Prostate gland (tissue), 2 donors: ENCODE measurements at regions of chr2 and their contacts with region 1.

Region 1: GRCh38 chr2:86298411-86299379 is 38.7 kb downstream of the REEP1 start:
- DNase-seq: no peak
- H3K4me3 ChIP-seq: no peak overlapping the region
- H3K27ac ChIP-seq: peak overlapping the region in 1 of 2 donors; percentile 13
- H3K4me1 ChIP-seq: no peaks in the 10 kb centered on the region
- H3K27me3 ChIP-seq: no peaks in the 10 kb centered on the region
- CTCF ChIP-seq: peak in 1 of 4 experiments; percentile 14
- POLR2A ChIP-seq: no peak

Region 2: DNA sequence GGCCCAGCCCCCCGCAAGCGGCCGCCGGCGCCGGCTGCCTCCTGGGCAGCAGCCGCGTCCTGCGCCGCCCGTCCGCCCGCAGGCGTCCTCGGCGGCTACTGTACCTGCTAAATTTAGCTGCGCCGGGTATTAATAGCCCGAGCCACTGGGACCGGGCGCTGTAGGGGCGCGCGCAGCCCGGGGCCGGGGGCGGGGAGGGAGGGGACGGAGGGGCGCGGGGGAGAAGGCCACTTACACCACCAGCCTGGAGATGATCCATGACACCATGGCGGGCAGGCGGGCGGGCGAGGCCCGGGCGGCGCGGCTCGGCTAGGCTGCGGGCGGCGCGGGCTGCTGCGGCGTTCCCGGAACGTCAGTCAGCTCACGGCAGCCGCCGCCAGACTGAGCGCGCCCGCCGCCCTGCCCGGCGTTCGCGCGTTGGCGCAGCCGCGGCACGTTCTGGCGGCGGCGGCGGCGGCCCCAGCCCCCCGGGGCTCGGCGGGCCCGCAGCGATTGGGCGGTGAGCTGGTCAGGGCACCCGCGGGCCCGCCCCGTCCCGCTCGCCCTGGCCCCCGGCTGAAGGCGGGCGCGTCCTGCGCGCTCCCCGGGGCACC is 38.6 kb after region 1 on chr2 and contains the start of gene REEP1:
- intact Hi-C with region 1: loop called (anchors 5 kb)
- DNase-seq: no peak
- H3K4me3 ChIP-seq: peak within 1 kb of the TSS; percentile 35 to 46
- H3K27ac ChIP-seq: no peak within 1 kb of the TSS
- H3K4me1 ChIP-seq: no peaks in the 10 kb centered on the region
- H3K27me3 ChIP-seq: no peaks in the 10 kb centered on the region
- CTCF ChIP-seq: no peak
- POLR2A ChIP-seq: no peak
- total RNA-seq, gene REEP1: 6.6 to 224 TPM

Region 3: DNA sequence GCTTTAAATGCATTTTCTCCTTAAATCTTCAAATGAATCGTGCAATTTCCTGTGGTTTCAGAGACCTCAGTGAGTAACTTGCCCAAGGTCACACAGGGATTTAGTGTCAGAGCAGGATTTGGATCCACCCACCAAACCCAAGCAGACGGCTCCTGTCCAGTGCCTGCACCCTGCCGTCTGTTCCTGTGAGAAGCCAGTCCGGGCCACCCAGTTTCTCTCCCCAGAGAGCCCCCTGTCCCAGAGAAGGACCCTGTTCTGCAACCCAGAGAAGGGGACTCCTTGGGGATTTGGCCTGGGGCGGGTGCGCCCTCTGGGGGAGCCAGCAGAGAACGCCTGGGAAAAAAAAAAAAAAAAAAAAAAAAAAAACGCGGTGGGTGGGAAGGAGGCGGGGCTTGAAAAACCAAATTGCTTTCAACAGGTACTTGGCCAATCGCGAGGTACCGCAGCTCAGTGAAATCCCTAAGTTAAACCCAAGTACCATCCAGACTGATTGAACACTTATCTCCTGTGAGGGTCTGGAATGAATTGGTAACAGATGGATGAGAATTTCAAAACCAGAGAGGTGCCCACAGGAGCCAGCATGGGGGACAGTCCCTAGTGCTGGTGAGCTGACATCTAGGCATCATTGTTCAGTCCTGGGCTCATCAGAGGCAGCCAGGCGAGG is 69.6 kb after region 1 on chr2:
- intact Hi-C with region 1: loop called (anchors 5 kb)
- DNase-seq: no peak
- H3K4me3 ChIP-seq: no peak overlapping the region
- H3K27ac ChIP-seq: no peak overlapping the region
- H3K4me1 ChIP-seq: no peaks in the 10 kb centered on the region
- H3K27me3 ChIP-seq: no peaks in the 10 kb centered on the region
- CTCF ChIP-seq: peak in 3 of 4 experiments; percentile 19 to 49 (median 22)
- POLR2A ChIP-seq: no peak